ENCODE measurements at regions of chr1 and their contacts with region 1.

Region 1: DNA sequence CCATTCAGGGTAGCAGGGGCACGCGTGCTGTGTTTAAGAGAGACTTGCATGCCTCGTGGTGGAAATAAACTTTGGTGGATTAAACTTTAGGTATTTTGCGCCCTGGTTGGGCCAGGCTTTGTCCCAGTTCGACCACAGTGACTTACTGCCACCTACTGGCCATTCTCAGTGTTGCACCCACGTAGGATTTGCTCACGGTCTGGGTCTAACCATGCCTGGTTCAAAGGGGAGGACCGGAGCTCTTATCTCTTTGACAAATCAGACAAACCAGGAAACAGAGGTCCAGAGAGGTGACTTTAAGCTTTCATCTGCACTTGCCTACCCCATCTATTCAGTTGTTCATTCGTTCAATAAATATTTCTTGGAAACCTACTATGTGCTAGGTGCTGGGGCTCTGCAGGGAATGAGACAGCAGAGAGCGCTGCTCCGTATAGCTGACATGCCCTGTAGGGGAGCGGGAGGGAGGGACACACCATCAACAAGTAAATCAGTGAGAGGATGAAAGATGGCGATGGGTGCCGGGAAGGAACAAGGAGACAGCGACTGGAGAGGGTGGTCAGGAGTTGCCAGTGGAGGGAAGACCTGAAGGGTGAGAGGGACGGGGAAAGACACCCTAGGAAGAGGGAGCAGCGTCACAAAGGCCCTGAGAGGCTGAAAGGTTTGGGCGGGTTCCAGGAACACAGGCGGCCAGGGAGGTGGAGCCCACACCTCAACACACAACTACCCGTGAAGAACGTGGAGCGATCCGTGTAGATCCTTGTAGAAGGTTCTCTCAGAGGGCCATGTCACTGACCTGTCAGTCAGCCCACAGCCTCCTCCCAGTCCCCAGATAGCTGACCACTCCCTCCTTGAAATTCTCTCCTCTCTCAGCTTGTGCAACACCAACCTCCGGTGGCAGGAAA is 27.2 kb upstream of the TINAGL1 start:
- DNase-seq: peak; percentile 82 to 93
- ATAC-seq: peak; percentile 80

Region 2: GRCh38 chr1:30329802-30330557 is 1219.2 kb before region 1 on chr1:
- intact Hi-C with region 1: no loop called
- DNase-seq: no peak
- ATAC-seq: no peak

Region 3: DNA sequence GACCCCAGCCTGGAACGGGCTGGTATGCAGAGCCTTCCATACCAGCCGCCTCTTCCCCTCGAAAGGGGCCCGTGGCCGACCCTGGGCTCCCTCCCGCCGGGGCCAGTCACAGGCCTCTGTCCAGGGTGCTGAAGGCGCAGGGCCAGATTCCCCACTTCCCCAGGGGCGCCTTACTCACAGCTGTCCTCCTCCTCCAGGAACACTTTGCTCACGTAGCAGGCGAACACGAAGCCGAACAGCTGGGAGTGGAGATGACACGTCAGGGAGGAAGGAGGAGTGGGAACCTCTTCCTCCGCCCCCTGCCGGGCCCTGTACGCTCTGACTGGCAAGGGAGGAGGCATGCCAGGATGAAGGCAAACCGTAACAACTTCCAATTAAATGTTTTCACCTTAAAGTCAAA is 366.8 kb before region 1 on chr1:
- intact Hi-C with region 1: loop called in 1 of 2 experiments (anchors 5 kb)
- DNase-seq: peak; percentile 51 to 74
- ATAC-seq: peak; percentile 81

Region 4: GRCh38 chr1:31394628-31395193 is 154.4 kb before region 1 on chr1:
- intact Hi-C with region 1: loop called in 1 of 2 experiments (anchors 10 kb)
- DNase-seq: peak; percentile 88 to 95
- ATAC-seq: peak; percentile 83

Region 5: GRCh38 chr1:31483012-31483946 is 65.9 kb before region 1 on chr1:
- intact Hi-C with region 1: no loop called
- DNase-seq: peak; percentile 50 to 56
- ATAC-seq: peak; percentile 85

Region 6: GRCh38 chr1:31689821-31690220 is 140.7 kb after region 1 on chr1:
- intact Hi-C with region 1: no loop called
- DNase-seq: no peak
- ATAC-seq: no peak

Region 7: GRCh38 chr1:31723828-31724359 is 174.7 kb after region 1 on chr1:
- intact Hi-C with region 1: no loop called
- DNase-seq: peak; percentile 70 to 86
- ATAC-seq: peak; percentile 74

Measured in left colon (tissue), 2 donors.